Activated naive CD4-positive, alpha-beta T cell treated with anti-CD3 and anti-CD28 coated beads for 36 hours (primary cell): ENCODE measurements at regions of chr1 and their contacts with region 1.

Region 1: DNA sequence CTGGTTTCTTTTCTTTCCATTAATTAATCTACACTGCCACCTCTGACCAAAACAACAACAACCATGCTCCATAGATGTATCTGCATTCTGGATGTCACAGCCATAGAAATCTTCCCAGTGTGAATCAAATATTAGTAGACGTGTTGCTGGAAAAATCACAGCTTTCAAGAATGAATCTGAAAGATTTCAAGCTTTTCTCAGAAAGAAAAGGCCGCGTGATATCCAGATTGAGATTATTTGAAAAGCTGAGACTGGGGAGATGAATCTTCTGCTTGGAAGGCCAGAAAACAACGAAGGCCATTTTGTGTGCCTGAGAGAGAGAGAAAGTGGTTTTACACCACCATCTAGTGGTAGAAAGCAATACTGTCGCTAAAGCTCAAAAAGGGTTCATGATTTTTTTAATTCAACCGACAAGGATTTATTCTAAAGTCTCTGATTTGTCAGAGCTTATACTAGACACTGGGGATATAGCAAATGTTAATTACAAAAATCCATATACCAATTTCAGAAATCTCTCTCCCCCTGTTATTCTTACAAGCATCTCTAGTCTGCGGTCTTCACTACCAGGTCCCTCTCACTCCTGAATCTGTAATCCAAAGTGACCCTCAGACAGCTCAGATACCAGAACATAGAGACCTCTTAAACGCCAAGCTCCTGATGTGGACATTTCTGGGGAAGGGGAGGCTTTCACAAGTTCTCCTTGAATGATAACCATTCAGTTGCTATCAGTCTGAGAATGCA is 87.5 kb upstream of the SGIP1 start:
- DNase-seq: peak; percentile 45
- H3K4me3 Mint-ChIP-seq: peak overlapping the region; percentile 74
- H3K27ac Mint-ChIP-seq: peak overlapping the region; percentile 92
- H3K4me1 Mint-ChIP-seq: peaks cover 26% of the 10 kb centered on the region
- H3K27me3 Mint-ChIP-seq: peaks cover 5% of the 10 kb centered on the region

Region 2: GRCh38 chr1:65067491-65068201 is 1378.8 kb before region 1 on chr1:
- CTCF ChIA-PET with region 1: no interaction called
- intact Hi-C with region 1: loop called (anchors 10 kb)
- DNase-seq: peak; percentile 71
- H3K4me3 Mint-ChIP-seq: peak overlapping the region; percentile 87
- H3K27ac Mint-ChIP-seq: peak overlapping the region; percentile 95
- H3K4me1 Mint-ChIP-seq: peaks cover 51% of the 10 kb centered on the region
- H3K27me3 Mint-ChIP-seq: no peaks in the 10 kb centered on the region

Region 3: DNA sequence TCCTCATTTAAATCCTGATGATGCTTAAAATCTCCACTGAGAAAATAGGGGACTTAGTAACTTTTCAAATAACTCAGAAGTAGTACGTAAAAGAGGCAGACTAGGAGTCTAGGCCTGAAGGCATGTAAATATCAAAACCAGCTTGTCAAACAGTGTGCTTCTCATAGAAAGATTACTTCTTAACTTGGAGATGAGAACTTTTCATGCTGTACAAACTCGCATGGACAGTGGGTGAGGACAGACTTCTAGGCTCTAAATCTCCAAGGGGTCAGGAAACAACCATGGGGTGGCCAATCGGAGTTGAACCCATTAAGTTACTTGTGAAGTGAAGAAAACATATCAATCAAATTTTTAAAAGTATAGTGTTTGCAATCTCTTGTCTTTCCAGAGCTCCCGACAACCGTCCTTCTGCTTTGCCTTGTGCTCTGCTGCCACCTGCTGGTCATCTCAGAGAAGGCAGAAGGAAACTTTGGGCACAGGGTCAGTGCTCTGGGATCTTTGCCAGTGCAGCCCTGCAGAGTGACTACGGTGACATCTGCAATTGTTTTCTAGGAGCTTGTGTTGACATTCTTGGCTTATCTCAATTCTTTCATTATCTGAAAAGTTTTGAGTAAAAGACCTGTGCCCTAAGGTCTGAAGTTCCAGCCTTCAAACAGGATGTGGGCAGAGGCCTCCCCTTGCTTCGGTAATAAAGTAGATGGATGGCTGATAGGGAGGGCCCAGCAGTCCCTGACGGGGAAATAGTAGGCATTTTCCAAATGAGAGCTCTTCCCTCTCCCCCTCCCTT is 758.8 kb before region 1 on chr1:
- CTCF ChIA-PET with region 1: interaction called, 3 read pairs
- intact Hi-C with region 1: loop called (anchors 2 kb)
- DNase-seq: peak; percentile 88
- H3K4me3 Mint-ChIP-seq: no peak overlapping the region
- H3K27ac Mint-ChIP-seq: no peak overlapping the region
- H3K4me1 Mint-ChIP-seq: peaks cover 6% of the 10 kb centered on the region
- H3K27me3 Mint-ChIP-seq: peaks cover 9% of the 10 kb centered on the region

Region 4: GRCh38 chr1:65958561-65959350 is 487.7 kb before region 1 on chr1:
- CTCF ChIA-PET with region 1: interaction called, 30 read pairs
- intact Hi-C with region 1: loop called (anchors 1 kb)
- DNase-seq: peak; percentile 27
- H3K4me3 Mint-ChIP-seq: no peak overlapping the region
- H3K27ac Mint-ChIP-seq: no peak overlapping the region
- H3K4me1 Mint-ChIP-seq: no peaks in the 10 kb centered on the region
- H3K27me3 Mint-ChIP-seq: no peaks in the 10 kb centered on the region

Region 5: DNA sequence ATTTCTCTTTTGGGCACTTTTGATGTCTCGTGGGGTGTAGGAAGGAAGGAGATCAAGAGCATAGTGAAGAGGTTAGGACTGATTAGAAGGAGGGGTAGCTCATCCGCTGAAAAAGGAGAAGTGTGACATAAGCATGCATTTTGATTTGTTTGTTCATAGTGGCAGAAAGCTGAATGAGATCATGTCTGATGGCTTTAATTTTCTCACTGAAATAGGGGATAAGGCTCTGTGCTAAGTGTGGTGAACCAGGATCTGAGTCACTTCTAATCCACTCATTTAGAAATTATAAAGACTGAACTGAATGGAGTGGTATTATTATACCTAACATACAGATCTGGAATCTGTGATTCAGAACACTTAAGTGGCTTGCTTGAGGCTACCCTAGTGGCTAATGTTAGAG is 309.2 kb before region 1 on chr1:
- CTCF ChIA-PET with region 1: no interaction called
- intact Hi-C with region 1: no loop called
- DNase-seq: no peak
- H3K4me3 Mint-ChIP-seq: no peak overlapping the region
- H3K27ac Mint-ChIP-seq: no peak overlapping the region
- H3K4me1 Mint-ChIP-seq: peaks cover 8% of the 10 kb centered on the region
- H3K27me3 Mint-ChIP-seq: no peaks in the 10 kb centered on the region

Region 6: DNA sequence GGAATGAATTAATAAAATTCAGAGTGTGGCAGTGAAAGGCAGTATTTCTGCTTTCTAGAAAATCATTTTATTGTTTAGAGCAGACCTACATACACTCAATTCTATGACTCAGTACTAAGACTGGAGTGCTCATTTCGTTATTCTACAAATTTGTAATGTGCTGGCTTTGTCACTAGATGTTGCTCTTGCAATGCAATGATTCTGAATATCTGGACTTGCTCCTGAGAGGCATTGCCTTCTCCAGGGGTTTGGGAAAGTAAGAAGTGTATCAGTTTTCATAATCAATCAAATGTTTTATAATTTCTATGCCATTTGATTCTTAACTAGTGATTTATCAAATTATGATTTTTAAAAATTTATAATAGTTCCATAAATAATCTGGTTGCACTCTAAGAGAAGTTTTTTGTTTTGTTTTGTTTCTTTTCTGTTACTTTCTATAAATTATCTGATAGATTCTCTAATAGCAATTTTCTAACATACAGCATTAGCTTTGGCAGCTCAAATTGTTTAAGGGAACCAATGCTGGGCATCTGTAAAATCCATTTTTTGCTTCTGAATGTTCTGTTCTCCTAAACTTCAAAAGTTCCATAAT is 193.0 kb before region 1 on chr1:
- CTCF ChIA-PET with region 1: interaction called, 474 read pairs
- intact Hi-C with region 1: loop called (anchors 1 kb)
- DNase-seq: peak; percentile 39
- H3K4me3 Mint-ChIP-seq: no peak overlapping the region
- H3K27ac Mint-ChIP-seq: no peak overlapping the region
- H3K4me1 Mint-ChIP-seq: peaks cover 48% of the 10 kb centered on the region
- H3K27me3 Mint-ChIP-seq: no peaks in the 10 kb centered on the region

Region 7: GRCh38 chr1:66350001-66350547 is 96.4 kb before region 1 on chr1:
- CTCF ChIA-PET with region 1: interaction called, 49 read pairs
- intact Hi-C with region 1: loop called (anchors 1 kb)
- DNase-seq: peak; percentile 80
- H3K4me3 Mint-ChIP-seq: peak overlapping the region; percentile 33
- H3K27ac Mint-ChIP-seq: peak overlapping the region; percentile 90
- H3K4me1 Mint-ChIP-seq: peaks cover 92% of the 10 kb centered on the region
- H3K27me3 Mint-ChIP-seq: no peaks in the 10 kb centered on the region

Region 8: GRCh38 chr1:66503841-66504470 is 57.5 kb after region 1 on chr1:
- CTCF ChIA-PET with region 1: interaction called, 22 read pairs
- intact Hi-C with region 1: loop called (anchors 1 kb)
- DNase-seq: peak; percentile 74
- H3K4me3 Mint-ChIP-seq: no peak overlapping the region
- H3K27ac Mint-ChIP-seq: no peak overlapping the region
- H3K4me1 Mint-ChIP-seq: no peaks in the 10 kb centered on the region
- H3K27me3 Mint-ChIP-seq: peaks cover 15% of the 10 kb centered on the region

Region 9: GRCh38 chr1:66671455-66671854 is 225.0 kb after region 1 on chr1:
- CTCF ChIA-PET with region 1: no interaction called
- intact Hi-C with region 1: no loop called
- DNase-seq: no peak
- H3K4me3 Mint-ChIP-seq: no peak overlapping the region
- H3K27ac Mint-ChIP-seq: no peak overlapping the region
- H3K4me1 Mint-ChIP-seq: no peaks in the 10 kb centered on the region
- H3K27me3 Mint-ChIP-seq: no peaks in the 10 kb centered on the region